Left lung (tissue), 14 donors: ENCODE measurements at regions of chr7 and their contacts with region 1.

Region 1: GRCh38 chr7:55255496-55256435 is 109.4 kb upstream of the LANCL2 start:
- DNase-seq: peak; percentile 69 to 91 (median 87)
- ATAC-seq: peak; percentile 96
- H3K4me3 ChIP-seq: peak overlapping the region; percentile 48 to 52
- H3K27ac ChIP-seq: no peak overlapping the region
- H3K4me1 ChIP-seq: peaks cover 4 to 19% of the 10 kb centered on the region in 2 donors
- H3K27me3 ChIP-seq: peaks cover 0 to 53% of the 10 kb centered on the region in 2 donors
- CTCF ChIP-seq: peak; percentile 78 to 83

Region 2: DNA sequence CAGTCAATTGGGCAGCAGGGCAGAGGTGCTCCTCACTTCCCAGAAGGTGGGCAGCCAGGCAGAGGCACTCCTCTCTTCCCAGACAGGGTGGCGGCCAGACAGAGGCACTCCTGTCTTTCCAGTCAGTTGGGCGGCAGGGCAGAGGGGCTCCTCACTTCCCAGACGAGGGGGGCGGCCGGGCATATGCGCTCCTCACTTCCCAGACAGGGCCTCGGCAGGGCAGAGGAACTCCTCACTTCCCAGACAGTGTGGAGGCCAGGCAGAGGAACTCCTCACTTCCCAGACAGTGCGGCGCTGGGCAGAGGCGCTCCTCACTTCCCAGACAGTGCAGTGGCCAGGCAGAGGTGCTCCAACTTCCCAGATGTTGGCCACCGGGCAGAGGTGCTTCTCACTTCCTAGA is 463.4 kb before region 1 on chr7:
- intact Hi-C with region 1: loop called in 1 of 2 experiments (anchors 5 kb)
- DNase-seq: no peak
- ATAC-seq: no peak
- H3K4me3 ChIP-seq: no peak overlapping the region
- H3K27ac ChIP-seq: no peak overlapping the region
- H3K4me1 ChIP-seq: no peaks in the 10 kb centered on the region
- H3K27me3 ChIP-seq: no peaks in the 10 kb centered on the region
- CTCF ChIP-seq: no peak